CD8-positive, alpha-beta T cell (primary cell): ENCODE measurements at regions of chr16 and their contacts with region 1.

Region 1: GRCh38 chr16:10876799-10877341 is at the start of gene CIITA:
- DNase-seq: peak; percentile 24 to 91 (median 52)
- ATAC-seq: peak; percentile 76
- H3K4me3 ChIP-seq: peak within 1 kb of the TSS in 1 of 2 experiments; percentile 85
- H3K4me3 Mint-ChIP-seq: peak within 1 kb of the TSS; percentile 90
- H3K27ac ChIP-seq: peak within 1 kb of the TSS; percentile 34 to 47
- H3K27ac Mint-ChIP-seq: peak within 1 kb of the TSS; percentile 68
- H3K4me1 ChIP-seq: peaks cover 35% of the 10 kb centered on the region
- H3K4me1 Mint-ChIP-seq: peaks cover 48% of the 10 kb centered on the region
- H3K27me3 ChIP-seq: peaks cover 0 to 4% of the 10 kb centered on the region in 2 experiments
- H3K27me3 Mint-ChIP-seq: peaks cover 40% of the 10 kb centered on the region
- CTCF ChIP-seq: no peak
- total RNA-seq, gene CIITA: 4.0 to 5.8 TPM

Region 2: GRCh38 chr16:10765772-10766171 is 111.1 kb before region 1 on chr16:
- CTCF ChIA-PET with region 1: no interaction called
- POLR2A ChIA-PET with region 1: no interaction called
- intact Hi-C with region 1: loop called in 1 of 2 experiments (anchors 10 kb)
- DNase-seq: peak in 5 of 9 experiments; percentile 20 to 86 (median 61)
- ATAC-seq: peak; percentile 87
- H3K4me3 ChIP-seq: no peak overlapping the region
- H3K4me3 Mint-ChIP-seq: peak overlapping the region; percentile 39
- H3K27ac ChIP-seq: peak overlapping the region in 1 of 2 experiments; percentile 52
- H3K27ac Mint-ChIP-seq: peak overlapping the region; percentile 86
- H3K4me1 ChIP-seq: peaks cover 21% of the 10 kb centered on the region
- H3K4me1 Mint-ChIP-seq: peaks cover 23% of the 10 kb centered on the region
- H3K27me3 ChIP-seq: no peaks in the 10 kb centered on the region
- H3K27me3 Mint-ChIP-seq: no peaks in the 10 kb centered on the region
- CTCF ChIP-seq: no peak